H1 (cell line): ENCODE measurements at regions of chr9 and their contacts with region 1.

Region 1: DNA sequence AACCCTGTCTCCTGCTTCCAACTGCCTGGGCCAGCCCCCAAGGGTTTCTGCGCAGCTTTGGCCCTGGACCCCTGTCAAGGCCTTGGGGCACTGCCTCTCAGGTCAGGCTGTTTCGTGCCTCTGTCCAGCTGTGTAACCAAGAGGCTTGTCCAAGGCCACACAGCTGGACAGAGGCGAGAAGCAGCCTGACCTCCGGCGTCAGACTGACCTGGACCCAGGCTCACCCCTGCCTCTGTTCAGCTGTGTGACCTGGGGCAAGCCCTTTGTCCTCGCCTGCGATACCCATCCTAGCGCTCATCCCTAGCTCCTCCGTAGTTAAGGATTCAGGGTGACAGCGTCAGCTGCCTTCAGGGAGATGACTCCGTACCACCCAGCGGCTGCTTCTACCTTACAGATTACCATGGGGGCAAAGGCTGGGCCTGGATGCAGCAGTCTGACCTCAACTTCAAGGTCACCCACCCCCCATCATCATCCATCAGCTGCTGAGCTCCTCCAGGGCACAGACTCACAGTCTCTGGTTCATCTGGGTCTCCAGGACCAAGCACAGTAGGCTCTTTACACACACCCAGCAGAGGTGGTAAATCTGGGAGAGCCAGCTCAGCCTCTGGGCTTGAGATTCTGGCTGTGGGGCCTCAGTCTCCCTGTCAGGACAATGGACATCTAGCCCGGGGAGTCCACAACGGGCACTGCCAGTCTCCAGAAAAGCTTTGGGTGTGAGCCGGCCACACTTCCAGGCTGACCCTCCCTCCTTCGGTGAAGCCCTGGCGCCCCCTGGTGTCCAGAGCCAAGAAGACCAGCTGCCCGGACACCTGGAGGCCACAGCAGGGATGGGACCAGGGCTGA is 7.9 kb downstream of the AK1 start:
- DNase-seq: peak; percentile 59 to 98
- H3K4me3 ChIP-seq: no peak overlapping the region
- H3K27ac ChIP-seq: no peak overlapping the region
- H3K4me1 ChIP-seq: peaks cover 0 to 8% (median 2%) of the 10 kb centered on the region in 4 experiments; a peak in 1 of 7 replicates
- H3K27me3 ChIP-seq: no peaks in the 10 kb centered on the region; a peak in 1 of 7 replicates
- CTCF ChIP-seq: peak in 2 of 3 experiments; percentile 94 to 99; a peak in 3 of 4 replicates
- EP300 ChIP-seq: no peak
- POLR2A ChIP-seq: no peak
- RAD21 ChIP-seq: peak; percentile 96 to 97

Region 2: DNA sequence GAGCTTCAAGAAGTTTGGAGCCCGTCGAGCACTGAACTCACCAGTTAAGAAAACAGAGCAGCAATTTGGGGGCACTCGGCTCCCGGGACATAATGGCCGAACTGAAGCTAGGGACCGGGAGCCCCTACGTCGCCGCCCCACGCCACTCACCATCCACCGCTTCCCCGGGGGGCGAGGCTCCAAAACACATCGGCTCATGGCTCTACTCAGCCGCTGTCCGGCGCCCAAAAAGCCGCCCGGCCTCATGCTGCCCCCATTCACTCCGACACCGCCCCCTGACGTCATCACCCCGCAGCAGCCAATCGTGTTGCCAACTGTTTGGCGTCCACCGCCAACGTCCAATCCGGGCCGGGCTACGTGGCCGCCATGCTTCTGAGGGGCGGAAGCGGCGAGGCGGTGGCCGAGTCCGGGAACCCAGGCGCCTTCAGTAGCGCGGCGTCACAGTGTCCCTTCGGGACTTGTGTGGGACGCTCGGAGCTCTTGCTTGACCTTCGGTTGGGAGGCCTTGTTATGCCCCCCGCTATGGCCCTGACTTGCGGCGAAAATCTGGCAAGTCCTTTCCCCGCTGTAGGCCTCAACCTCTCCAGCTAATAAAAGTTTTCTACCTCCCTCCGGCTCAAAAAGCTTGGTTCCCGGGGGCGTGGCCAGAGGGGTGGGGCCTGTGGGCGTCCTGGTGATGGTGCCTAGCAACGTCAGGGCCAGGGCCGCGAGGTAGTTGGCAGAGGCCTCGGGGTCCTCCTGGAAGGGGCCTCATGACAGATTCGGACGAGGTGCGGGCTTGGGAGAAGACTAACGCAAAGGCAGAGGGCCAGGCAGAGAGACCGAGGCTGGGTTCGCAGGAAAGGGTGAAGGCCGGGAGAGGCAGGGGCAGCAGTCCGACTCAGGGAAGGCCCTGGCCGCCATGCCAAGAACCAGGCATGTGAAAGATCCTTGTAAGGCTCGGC is 153.9 kb before region 1 on chr9 and contains the starts of genes PTRH1 and TTC16:
- CTCF ChIA-PET with region 1: interaction called, 10 read pairs
- POLR2A ChIA-PET with region 1: no interaction called
- DNase-seq: peak; percentile 77 to 99
- H3K4me3 ChIP-seq: peak within 1 kb of the TSS; percentile 64 to 82 (median 75)
- H3K27ac ChIP-seq: no peak within 1 kb of the TSS
- H3K4me1 ChIP-seq: peaks cover 0 to 28% (median 21%) of the 10 kb centered on the region in 4 experiments; a peak in 6 of 7 replicates
- H3K27me3 ChIP-seq: 0 out of 7 replicates have a peak, but pooled peaks cover 0 to 2% (median 0%) of the 10 kb centered on the region in 4 experiments
- CTCF ChIP-seq: no peak
- EP300 ChIP-seq: no peak
- POLR2A ChIP-seq: peak in 1 of 2 experiments; percentile 45; a peak in 1 of 3 replicates
- RAD21 ChIP-seq: no peak
- total RNA-seq, gene PTRH1: 11.1 and 11.2 TPM in 2 replicates
- total RNA-seq, gene TTC16: not detected in 2 replicates

Region 3: DNA sequence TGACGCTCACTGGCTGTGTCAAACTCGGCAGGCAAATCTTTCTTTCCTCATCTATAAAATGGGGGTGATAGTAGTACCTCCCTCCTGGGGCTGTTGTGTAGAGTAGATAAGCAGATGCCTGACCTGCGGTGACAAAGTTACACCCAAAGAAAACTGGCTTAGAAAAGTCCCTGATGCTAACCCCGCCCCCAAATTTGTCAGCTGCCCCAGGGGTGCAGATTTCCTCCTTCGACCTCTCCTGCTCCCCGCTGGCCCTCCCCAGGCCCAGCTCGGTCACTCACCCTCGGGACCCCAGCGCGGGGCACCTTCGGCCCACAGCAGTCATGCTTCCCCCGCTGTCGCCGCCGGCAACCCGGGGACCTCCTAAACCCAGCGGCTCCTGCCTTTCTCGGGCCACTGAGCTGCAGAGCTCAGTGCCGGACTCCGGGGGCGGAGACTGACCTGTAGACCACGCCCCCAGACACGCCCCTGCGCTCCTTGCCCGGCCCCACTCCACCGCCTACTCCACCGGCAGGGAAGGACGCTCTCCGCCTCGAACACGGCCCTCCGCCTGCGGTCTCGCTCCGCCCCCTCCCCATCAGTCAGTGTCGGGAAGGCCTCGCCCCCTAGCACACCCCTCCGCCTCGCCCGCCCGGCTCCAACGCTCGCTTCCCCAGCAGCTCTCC is 98.5 kb before region 1 on chr9:
- CTCF ChIA-PET with region 1: interaction called, 16 read pairs
- POLR2A ChIA-PET with region 1: no interaction called
- DNase-seq: peak; percentile 97 to 99
- H3K4me3 ChIP-seq: peak overlapping the region; percentile 50 to 72 (median 60)
- H3K27ac ChIP-seq: no peak overlapping the region
- H3K4me1 ChIP-seq: peaks cover 1 to 16% (median 8%) of the 10 kb centered on the region in 4 experiments
- H3K27me3 ChIP-seq: no peaks in the 10 kb centered on the region
- CTCF ChIP-seq: no peak
- EP300 ChIP-seq: no peak
- POLR2A ChIP-seq: no peak
- RAD21 ChIP-seq: no peak

Region 4: GRCh38 chr9:127802576-127803443 is 66.7 kb before region 1 on chr9 and contains the start of gene FPGS:
- CTCF ChIA-PET with region 1: interaction called, 20 read pairs
- POLR2A ChIA-PET with region 1: interaction called, 7 read pairs
- DNase-seq: peak; percentile 65 to 88
- H3K4me3 ChIP-seq: peak within 1 kb of the TSS; percentile 61 to 86 (median 81)
- H3K27ac ChIP-seq: peak within 1 kb of the TSS; percentile 87
- H3K4me1 ChIP-seq: peaks cover 5 to 9% (median 6%) of the 10 kb centered on the region in 4 experiments; a peak in 6 of 7 replicates
- H3K27me3 ChIP-seq: no peaks in the 10 kb centered on the region
- CTCF ChIP-seq: no peak
- EP300 ChIP-seq: 0 out of 3 replicates have a peak, but pooled peaks of 1 of the 2 experiments have one; percentile 15
- POLR2A ChIP-seq: peak in 1 of 2 experiments; percentile 88; a peak in 2 of 3 replicates
- RAD21 ChIP-seq: no peak
- total RNA-seq, gene FPGS: 62.4 and 63.7 TPM in 2 replicates

Region 5: GRCh38 chr9:127828262-127829031 is 41.1 kb before region 1 on chr9:
- CTCF ChIA-PET with region 1: interaction called, 116 read pairs
- POLR2A ChIA-PET with region 1: interaction called, 4 read pairs
- DNase-seq: peak; percentile 70 to 97
- H3K4me3 ChIP-seq: peak overlapping the region; percentile 23 to 55 (median 36); a peak in 6 of 8 replicates
- H3K27ac ChIP-seq: peak overlapping the region; percentile 2; the same call in 1 of the 2 replicates
- H3K4me1 ChIP-seq: peaks cover 0 to 17% (median 12%) of the 10 kb centered on the region in 4 experiments; a peak in 6 of 7 replicates
- H3K27me3 ChIP-seq: peaks cover 0 to 12% (median 7%) of the 10 kb centered on the region in 4 experiments; a peak in 5 of 7 replicates
- CTCF ChIP-seq: 0 out of 4 replicates have a peak, but pooled peaks of 1 of the 3 experiments have one; percentile 9
- EP300 ChIP-seq: no peak
- POLR2A ChIP-seq: peak in 1 of 2 experiments; percentile 89; a peak in 2 of 3 replicates
- RAD21 ChIP-seq: no peak; a peak in 1 of 4 replicates

Region 6: GRCh38 chr9:127854184-127854806 is 15.2 kb before region 1 on chr9 and contains the start of gene ENG:
- CTCF ChIA-PET with region 1: interaction called, 44 read pairs
- POLR2A ChIA-PET with region 1: interaction called, 15 read pairs
- DNase-seq: no peak
- H3K4me3 ChIP-seq: no peak within 1 kb of the TSS
- H3K27ac ChIP-seq: no peak within 1 kb of the TSS
- H3K4me1 ChIP-seq: peaks cover 0 to 10% (median 6%) of the 10 kb centered on the region in 4 experiments; a peak in 5 of 7 replicates
- H3K27me3 ChIP-seq: no peaks in the 10 kb centered on the region
- CTCF ChIP-seq: no peak
- EP300 ChIP-seq: no peak
- POLR2A ChIP-seq: no peak
- RAD21 ChIP-seq: no peak
- total RNA-seq, gene ENG: 4.2 and 4.4 TPM in 2 replicates

Region 7: GRCh38 chr9:127899128-127899946 is 29.8 kb after region 1 on chr9 and contains the start of gene ST6GALNAC6:
- CTCF ChIA-PET with region 1: interaction called, 14 read pairs
- POLR2A ChIA-PET with region 1: interaction called, 5 read pairs
- DNase-seq: peak in 1 of 2 experiments; percentile 82
- H3K4me3 ChIP-seq: peak within 1 kb of the TSS; percentile 78 to 99 (median 88)
- H3K27ac ChIP-seq: no peak within 1 kb of the TSS
- H3K4me1 ChIP-seq: peaks cover 3 to 40% (median 25%) of the 10 kb centered on the region in 4 experiments
- H3K27me3 ChIP-seq: no peaks in the 10 kb centered on the region
- CTCF ChIP-seq: no peak
- EP300 ChIP-seq: no peak
- POLR2A ChIP-seq: peak in 1 of 2 experiments; percentile 44; a peak in 1 of 3 replicates
- RAD21 ChIP-seq: no peak
- total RNA-seq, gene ST6GALNAC6: 37.7 and 43.7 TPM in 2 replicates

Region 8: GRCh38 chr9:127966416-127967150 is 97.1 kb after region 1 on chr9:
- CTCF ChIA-PET with region 1: no interaction called
- POLR2A ChIA-PET with region 1: no interaction called
- DNase-seq: no peak
- H3K4me3 ChIP-seq: no peak overlapping the region
- H3K27ac ChIP-seq: no peak overlapping the region
- H3K4me1 ChIP-seq: peaks cover 0 to 51% (median 23%) of the 10 kb centered on the region in 4 experiments; a peak in 6 of 7 replicates
- H3K27me3 ChIP-seq: no peaks in the 10 kb centered on the region
- CTCF ChIP-seq: no peak
- EP300 ChIP-seq: no peak
- POLR2A ChIP-seq: no peak
- RAD21 ChIP-seq: no peak

Region 9: DNA sequence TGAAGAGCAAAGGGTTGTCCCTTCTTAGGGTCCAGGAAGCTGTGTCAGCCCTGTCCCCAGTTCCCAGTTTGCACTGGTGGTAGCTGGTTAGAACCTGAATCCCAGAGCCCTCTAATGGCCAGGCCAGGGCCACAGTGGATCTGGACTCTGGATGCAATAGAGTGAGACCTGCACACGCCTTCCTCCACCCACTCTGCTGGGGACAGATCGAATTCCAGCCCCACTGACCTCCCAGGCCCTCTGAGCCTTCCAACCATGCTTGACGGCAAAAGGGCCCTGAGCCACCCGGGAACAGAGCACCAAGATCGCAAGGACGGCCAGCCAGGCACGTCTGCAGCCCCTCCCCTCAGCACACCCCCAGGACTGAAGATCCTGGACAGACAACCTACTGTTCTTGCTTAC is 173.9 kb after region 1 on chr9:
- CTCF ChIA-PET with region 1: no interaction called
- POLR2A ChIA-PET with region 1: no interaction called
- DNase-seq: no peak
- H3K4me3 ChIP-seq: no peak overlapping the region
- H3K27ac ChIP-seq: no peak overlapping the region
- H3K4me1 ChIP-seq: no peaks in the 10 kb centered on the region; a peak in 2 of 7 replicates
- H3K27me3 ChIP-seq: no peaks in the 10 kb centered on the region
- CTCF ChIP-seq: no peak
- EP300 ChIP-seq: no peak
- POLR2A ChIP-seq: no peak
- RAD21 ChIP-seq: no peak

Region 10: DNA sequence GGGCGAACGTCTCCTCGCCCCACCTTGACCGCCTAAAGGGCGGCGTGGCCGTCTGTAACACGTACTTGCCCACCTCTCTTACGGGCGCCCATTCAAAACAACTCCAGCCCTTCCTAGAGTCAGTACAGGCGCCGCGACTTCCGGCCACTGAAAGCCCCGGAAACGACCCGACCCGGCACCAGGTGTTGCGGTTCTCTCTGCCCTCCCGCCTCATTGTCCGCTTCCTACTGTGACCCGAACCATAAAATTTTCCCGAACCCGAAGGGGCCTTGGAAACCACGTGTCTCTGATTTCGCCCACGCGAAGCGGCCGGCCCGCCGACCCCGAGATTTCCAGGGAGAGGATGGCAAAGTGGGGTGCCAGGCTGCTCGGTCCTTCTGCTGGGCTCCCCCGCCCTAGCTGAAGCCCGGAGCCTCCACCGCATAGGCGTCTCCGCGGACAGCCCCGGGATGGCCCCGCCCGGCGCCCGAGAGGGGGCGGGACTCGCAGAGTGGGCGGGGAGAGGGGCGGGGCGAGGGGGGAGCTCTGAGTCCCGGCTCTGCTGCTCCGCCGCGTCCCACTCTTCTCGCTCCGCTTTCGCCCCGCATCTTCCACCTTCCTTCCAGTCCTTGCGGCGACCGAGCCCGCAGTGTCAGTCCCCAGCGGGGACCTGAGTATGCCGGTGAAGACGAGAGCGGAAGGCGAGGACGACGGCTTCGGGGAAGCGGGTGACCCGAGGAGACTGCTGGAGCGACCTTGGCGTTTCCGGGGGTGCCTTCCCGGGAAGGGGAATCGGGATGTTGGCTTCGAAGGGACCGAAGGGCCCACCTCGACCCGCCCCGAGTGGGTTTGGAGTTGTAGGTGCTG is 258.7 kb after region 1 on chr9:
- CTCF ChIA-PET with region 1: no interaction called
- POLR2A ChIA-PET with region 1: no interaction called
- DNase-seq: peak in 1 of 2 experiments; percentile 92
- H3K4me3 ChIP-seq: peak overlapping the region; percentile 86 to 96 (median 89)
- H3K27ac ChIP-seq: peak overlapping the region; percentile 95
- H3K4me1 ChIP-seq: peaks cover 0 to 6% (median 3%) of the 10 kb centered on the region in 4 experiments; a peak in 4 of 7 replicates
- H3K27me3 ChIP-seq: peaks cover 0 to 8% (median 7%) of the 10 kb centered on the region in 4 experiments; a peak in 5 of 7 replicates
- CTCF ChIP-seq: no peak
- EP300 ChIP-seq: no peak; a peak in 1 of 3 replicates
- POLR2A ChIP-seq: peak in 1 of 2 experiments; percentile 38; a peak in 1 of 3 replicates
- RAD21 ChIP-seq: no peak